CD8-positive, alpha-beta T cell (primary cell): ENCODE measurements at regions of chr4 and their contacts with region 1.

Region 1: GRCh38 chr4:107719922-107720722 is at the start of gene PAPSS1:
- DNase-seq: peak; percentile 87 to 99 (median 96)
- ATAC-seq: peak; percentile 85
- H3K4me3 ChIP-seq: peak within 1 kb of the TSS; percentile 65 to 92
- H3K4me3 Mint-ChIP-seq: peak within 1 kb of the TSS; percentile 91
- H3K27ac ChIP-seq: peak within 1 kb of the TSS; percentile 64 to 82
- H3K27ac Mint-ChIP-seq: peak within 1 kb of the TSS; percentile 93
- H3K4me1 ChIP-seq: peaks cover 13% of the 10 kb centered on the region
- H3K4me1 Mint-ChIP-seq: peaks cover 40% of the 10 kb centered on the region
- H3K27me3 ChIP-seq: no peaks in the 10 kb centered on the region
- H3K27me3 Mint-ChIP-seq: no peaks in the 10 kb centered on the region
- CTCF ChIP-seq: no peak
- total RNA-seq, gene PAPSS1: 5.2 to 5.3 TPM

Region 2: GRCh38 chr4:105715692-105716278 is 2004.3 kb before region 1 on chr4:
- CTCF ChIA-PET with region 1: no interaction called
- POLR2A ChIA-PET with region 1: no interaction called
- intact Hi-C with region 1: loop called in 1 of 2 experiments (anchors 10 kb)
- DNase-seq: peak in 2 of 9 experiments; percentile 32 to 53
- ATAC-seq: no peak
- H3K4me3 ChIP-seq: no peak overlapping the region
- H3K4me3 Mint-ChIP-seq: no peak overlapping the region
- H3K27ac ChIP-seq: no peak overlapping the region
- H3K27ac Mint-ChIP-seq: no peak overlapping the region
- H3K4me1 ChIP-seq: peaks cover 5% of the 10 kb centered on the region
- H3K4me1 Mint-ChIP-seq: peaks cover 3% of the 10 kb centered on the region
- H3K27me3 ChIP-seq: no peaks in the 10 kb centered on the region
- H3K27me3 Mint-ChIP-seq: no peaks in the 10 kb centered on the region
- CTCF ChIP-seq: peak; percentile 54

Region 3: DNA sequence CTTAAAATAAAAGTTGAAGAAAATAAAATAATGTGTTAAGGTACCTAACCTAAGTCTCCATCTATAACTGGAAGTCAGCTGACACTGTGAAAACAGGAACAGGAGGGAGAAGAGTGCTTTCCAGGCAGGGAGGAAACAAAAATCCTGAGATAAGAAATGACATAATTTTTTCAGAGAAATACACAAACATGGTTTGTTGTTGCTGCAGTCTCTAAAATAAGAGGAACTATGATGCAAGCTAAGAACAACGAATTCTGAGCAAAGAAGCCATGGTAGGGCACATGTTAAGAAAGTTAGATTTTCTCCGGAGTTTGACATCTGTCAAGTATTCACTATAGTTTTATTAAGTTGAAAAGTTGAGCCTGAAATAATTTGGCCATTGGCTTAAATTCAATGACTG is 27.0 kb before region 1 on chr4:
- CTCF ChIA-PET with region 1: no interaction called
- POLR2A ChIA-PET with region 1: no interaction called
- intact Hi-C with region 1: no loop called
- DNase-seq: no peak
- ATAC-seq: no peak
- H3K4me3 ChIP-seq: no peak overlapping the region
- H3K4me3 Mint-ChIP-seq: no peak overlapping the region
- H3K27ac ChIP-seq: no peak overlapping the region
- H3K27ac Mint-ChIP-seq: no peak overlapping the region
- H3K4me1 ChIP-seq: no peaks in the 10 kb centered on the region
- H3K4me1 Mint-ChIP-seq: peaks cover 12% of the 10 kb centered on the region
- H3K27me3 ChIP-seq: no peaks in the 10 kb centered on the region
- H3K27me3 Mint-ChIP-seq: no peaks in the 10 kb centered on the region
- CTCF ChIP-seq: no peak

Region 4: DNA sequence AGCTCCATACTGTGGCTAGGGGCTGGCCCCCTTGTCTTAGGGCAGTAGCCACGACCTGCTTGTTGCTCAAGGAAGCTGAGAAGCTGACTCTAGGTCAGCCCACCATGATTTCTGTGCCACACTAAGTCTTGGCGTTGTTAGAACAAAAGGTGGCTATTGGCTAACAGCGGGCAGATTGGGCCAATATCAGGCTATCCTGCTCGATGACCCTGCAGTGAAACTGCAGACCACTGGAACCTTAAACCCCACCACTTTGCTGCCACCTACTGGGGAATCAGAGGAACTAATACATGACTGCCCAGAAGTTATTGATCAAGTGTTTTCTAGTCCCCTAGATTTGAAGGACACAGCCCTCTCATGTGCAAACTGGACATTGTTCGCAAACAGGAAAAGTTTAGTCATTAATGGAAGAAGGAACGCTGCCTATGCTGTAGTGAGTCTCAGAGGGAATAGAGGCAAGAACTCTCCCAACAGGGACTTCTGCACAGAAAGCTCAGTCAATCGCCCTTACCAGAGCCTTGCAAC is 16.9 kb after region 1 on chr4:
- CTCF ChIA-PET with region 1: interaction called, 14 read pairs
- POLR2A ChIA-PET with region 1: no interaction called
- intact Hi-C with region 1: loop called in 1 of 2 experiments (anchors 1 kb)
- DNase-seq: peak in 8 of 9 experiments; percentile 22 to 71 (median 46)
- ATAC-seq: peak; percentile 49
- H3K4me3 ChIP-seq: no peak overlapping the region
- H3K4me3 Mint-ChIP-seq: no peak overlapping the region
- H3K27ac ChIP-seq: no peak overlapping the region
- H3K27ac Mint-ChIP-seq: no peak overlapping the region
- H3K4me1 ChIP-seq: no peaks in the 10 kb centered on the region
- H3K4me1 Mint-ChIP-seq: no peaks in the 10 kb centered on the region
- H3K27me3 ChIP-seq: no peaks in the 10 kb centered on the region
- H3K27me3 Mint-ChIP-seq: peaks cover 2% of the 10 kb centered on the region
- CTCF ChIP-seq: peak; percentile 78

Region 5: GRCh38 chr4:107930821-107931774 is 211.0 kb after region 1 on chr4 and contains the start of gene CYP2U1:
- CTCF ChIA-PET with region 1: no interaction called
- POLR2A ChIA-PET with region 1: interaction called, 12 read pairs
- intact Hi-C with region 1: loop called (anchors 1 to 5 kb)
- DNase-seq: peak; percentile 48 to 89 (median 80)
- ATAC-seq: peak; percentile 92
- H3K4me3 ChIP-seq: peak within 1 kb of the TSS; percentile 61 to 86
- H3K4me3 Mint-ChIP-seq: peak within 1 kb of the TSS; percentile 95
- H3K27ac ChIP-seq: peak within 1 kb of the TSS; percentile 48 to 55
- H3K27ac Mint-ChIP-seq: peak within 1 kb of the TSS; percentile 92
- H3K4me1 ChIP-seq: peaks cover 8% of the 10 kb centered on the region
- H3K4me1 Mint-ChIP-seq: peaks cover 35% of the 10 kb centered on the region
- H3K27me3 ChIP-seq: no peaks in the 10 kb centered on the region
- H3K27me3 Mint-ChIP-seq: no peaks in the 10 kb centered on the region
- CTCF ChIP-seq: no peak
- total RNA-seq, gene CYP2U1: 3.4 to 3.6 TPM

Region 6: DNA sequence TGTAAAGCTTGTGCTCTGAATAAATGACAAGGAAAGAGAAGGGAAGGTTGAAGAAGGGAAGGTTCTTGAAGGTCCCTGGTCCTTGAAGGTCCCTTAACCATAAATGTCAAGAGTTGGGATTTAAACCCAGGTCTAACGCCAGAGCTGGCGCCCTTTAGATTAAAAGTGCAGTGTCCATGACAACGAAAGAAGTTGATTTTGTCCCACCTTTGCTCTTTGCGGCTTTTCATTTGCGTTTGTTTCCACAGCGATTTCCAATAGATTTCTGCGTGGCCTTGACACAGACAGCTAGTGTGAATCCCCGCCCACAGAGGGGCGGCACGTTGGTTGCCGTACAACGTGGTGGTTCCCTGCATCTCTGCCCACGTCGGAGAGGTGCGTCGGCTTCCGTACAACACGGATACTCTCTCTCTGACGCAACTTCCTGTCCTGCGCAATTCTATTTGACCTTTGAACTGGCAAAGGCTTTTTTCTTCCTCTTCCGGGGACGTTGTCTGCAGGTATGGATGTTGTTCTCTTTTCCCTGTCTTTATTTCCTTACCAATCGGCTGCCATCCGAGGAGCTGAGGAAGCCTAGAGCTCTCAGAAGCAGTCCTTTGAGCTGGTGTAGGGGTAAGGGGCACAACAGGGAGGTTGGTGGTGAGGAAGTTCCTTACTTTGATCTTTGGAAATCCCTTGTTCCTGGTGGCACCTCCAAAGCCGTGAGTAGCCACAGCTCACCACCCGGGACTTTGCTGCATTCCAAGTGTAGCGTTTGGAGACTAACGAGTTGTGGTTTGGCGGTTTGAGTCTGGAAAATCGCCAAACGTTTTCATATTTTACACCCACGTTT is 900.2 kb after region 1 on chr4 and contains the start of gene RPL34:
- CTCF ChIA-PET with region 1: no interaction called
- POLR2A ChIA-PET with region 1: interaction called, 4 read pairs
- intact Hi-C with region 1: loop called in 1 of 2 experiments (anchors 5 kb)
- DNase-seq: peak; percentile 94 to 100 (median 97)
- ATAC-seq: peak; percentile 98
- H3K4me3 ChIP-seq: peak within 1 kb of the TSS; percentile 92 to 97
- H3K4me3 Mint-ChIP-seq: peak within 1 kb of the TSS; percentile 93
- H3K27ac ChIP-seq: peak within 1 kb of the TSS; percentile 85 to 90
- H3K27ac Mint-ChIP-seq: peak within 1 kb of the TSS; percentile 96
- H3K4me1 ChIP-seq: peaks cover 50% of the 10 kb centered on the region
- H3K4me1 Mint-ChIP-seq: peaks cover 58% of the 10 kb centered on the region
- H3K27me3 ChIP-seq: no peaks in the 10 kb centered on the region
- H3K27me3 Mint-ChIP-seq: no peaks in the 10 kb centered on the region
- CTCF ChIP-seq: no peak
- total RNA-seq, gene RPL34: 3,253 to 3,442 TPM

Region 7: DNA sequence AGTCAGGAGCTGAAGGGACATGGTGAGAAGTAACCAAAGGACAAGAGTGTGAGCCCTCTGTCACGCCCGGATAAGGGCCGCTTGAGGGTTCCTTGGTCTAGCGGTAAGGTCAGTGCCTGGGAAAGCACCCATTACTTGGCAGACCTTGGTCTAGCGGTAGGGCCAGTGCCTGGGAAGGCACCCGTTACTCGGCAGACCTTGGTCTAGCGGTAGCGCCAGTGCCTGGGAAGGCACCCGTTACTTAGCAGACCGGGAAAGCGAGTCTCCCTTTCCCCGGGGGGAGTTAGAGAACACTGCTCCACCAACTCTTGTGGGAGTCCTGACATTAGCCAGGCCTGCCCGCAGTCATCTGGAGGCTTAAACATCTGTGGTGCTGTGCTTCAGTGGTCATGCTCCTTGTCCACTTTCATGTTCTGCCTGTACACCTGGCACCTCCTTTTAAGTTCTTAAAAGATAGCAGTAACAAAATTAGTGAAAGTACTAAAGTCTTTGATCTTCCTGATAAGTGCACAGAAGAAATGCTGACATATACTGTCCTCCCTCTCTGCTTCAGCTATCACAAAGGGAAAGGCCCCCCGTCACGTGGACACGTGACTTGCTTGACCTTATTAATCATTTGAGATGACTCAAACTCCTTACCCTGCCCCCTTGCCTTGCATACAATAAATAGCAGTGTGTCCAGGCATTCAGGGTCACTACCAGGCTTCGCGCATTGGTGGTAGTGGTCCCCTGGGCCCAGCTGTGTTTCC is 1704.1 kb after region 1 on chr4:
- CTCF ChIA-PET with region 1: no interaction called
- POLR2A ChIA-PET with region 1: no interaction called
- intact Hi-C with region 1: loop called in 1 of 2 experiments (anchors 5 kb)
- DNase-seq: no peak
- ATAC-seq: no peak
- H3K4me3 ChIP-seq: no peak overlapping the region
- H3K4me3 Mint-ChIP-seq: no peak overlapping the region
- H3K27ac ChIP-seq: no peak overlapping the region
- H3K27ac Mint-ChIP-seq: no peak overlapping the region
- H3K4me1 ChIP-seq: no peaks in the 10 kb centered on the region
- H3K4me1 Mint-ChIP-seq: peaks cover 2% of the 10 kb centered on the region
- H3K27me3 ChIP-seq: no peaks in the 10 kb centered on the region
- H3K27me3 Mint-ChIP-seq: no peaks in the 10 kb centered on the region
- CTCF ChIP-seq: no peak